Activated CD4-positive, alpha-beta memory T cell treated with anti-CD3 and anti-CD28 coated beads for 36 hours (primary cell): ENCODE measurements at regions of chr4 and their contacts with region 1.

Region 1: DNA sequence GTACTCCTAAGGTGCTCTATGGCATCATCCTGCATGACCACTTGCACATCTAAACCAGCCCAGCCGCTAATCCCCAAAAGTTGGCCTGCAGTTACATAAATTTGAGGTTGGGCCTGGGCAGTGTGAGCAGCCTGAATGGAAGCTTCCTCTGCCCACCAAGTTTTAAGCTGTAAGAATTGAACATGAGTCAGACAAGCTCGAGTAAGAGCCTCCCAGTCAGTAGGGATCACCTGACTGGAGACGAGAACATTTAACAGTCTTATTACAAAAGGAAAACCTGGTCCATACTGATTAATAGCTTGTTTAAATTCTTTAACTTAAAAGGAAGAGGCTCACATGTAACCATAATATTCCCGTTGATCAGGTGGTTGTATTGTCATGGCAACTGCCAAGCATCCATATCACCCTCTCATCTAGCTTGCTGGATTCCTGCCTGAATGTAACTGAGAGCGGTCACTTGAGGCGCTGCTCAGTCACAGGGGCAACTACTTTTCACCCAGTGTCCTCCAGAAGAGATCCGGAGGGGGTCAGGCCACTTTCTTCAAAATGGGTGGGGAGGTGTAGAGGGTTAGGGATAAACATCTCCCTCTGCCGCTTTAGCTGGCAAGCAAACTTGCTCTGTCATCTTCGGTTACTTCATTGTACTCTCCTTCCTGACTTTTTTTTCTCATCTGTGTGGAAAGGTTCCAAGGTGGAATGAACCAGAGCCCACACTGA is 56.6 kb upstream of the WDR1 start:
- DNase-seq: no peak
- H3K4me3 Mint-ChIP-seq: no peak overlapping the region
- H3K27ac Mint-ChIP-seq: no peak overlapping the region
- H3K4me1 Mint-ChIP-seq: no peaks in the 10 kb centered on the region
- H3K27me3 Mint-ChIP-seq: peaks cover 2% of the 10 kb centered on the region

Region 2: DNA sequence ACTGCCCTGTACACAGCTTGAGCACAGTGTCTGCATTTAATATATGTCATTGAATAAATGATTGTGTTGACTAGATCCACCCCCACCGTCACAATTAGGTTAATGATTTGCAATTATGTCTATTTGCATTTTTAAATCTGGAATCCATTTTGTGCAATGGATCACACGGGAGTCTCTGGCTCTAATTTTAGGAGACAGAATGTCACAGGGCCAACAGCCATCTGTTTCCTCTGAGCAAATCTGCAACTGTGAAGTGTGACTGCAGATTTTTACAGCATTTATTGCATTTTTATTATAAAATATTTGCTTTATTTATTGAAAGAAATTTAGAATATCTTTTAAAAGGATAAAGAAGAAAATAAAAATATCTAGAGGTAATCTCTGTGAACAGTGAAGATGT is 938.7 kb after region 1 on chr4:
- CTCF ChIA-PET with region 1: no interaction called
- POLR2A ChIA-PET with region 1: no interaction called
- intact Hi-C with region 1: loop called (anchors 10 kb)
- DNase-seq: no peak
- H3K4me3 Mint-ChIP-seq: no peak overlapping the region
- H3K27ac Mint-ChIP-seq: no peak overlapping the region
- H3K4me1 Mint-ChIP-seq: no peaks in the 10 kb centered on the region
- H3K27me3 Mint-ChIP-seq: peaks cover 3% of the 10 kb centered on the region